A673 (cell line): ENCODE measurements at regions of chr9 and their contacts with region 1.

Region 1: DNA sequence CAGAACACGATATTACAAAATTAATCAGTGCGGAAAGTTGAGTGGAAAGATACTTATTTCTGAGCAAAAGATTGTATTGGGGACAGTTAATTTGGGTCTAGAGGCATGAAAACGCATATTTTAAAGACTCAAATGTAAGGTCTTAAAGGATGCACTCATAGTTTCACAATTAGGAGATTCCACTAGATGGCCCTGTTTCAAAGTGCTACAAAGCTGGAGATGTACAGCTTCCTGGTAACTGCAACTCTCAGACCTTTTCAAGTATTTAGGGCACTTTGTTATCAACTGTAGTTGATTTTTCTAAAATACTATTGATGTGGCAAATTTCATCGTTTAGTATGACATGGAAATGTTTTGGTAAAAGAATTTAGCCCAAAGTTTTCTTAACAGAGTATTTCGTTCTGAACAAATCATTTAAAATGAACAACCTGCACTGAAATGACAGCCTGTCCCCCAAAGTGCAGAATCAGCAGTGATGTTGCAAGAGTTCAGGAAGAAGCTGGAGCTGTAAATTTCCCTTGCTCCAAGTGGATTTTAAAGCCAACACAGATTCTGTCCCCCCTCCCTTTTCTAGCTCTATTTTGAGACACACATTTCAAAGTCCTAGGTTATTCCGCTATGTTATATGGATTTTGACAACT is 16.2 kb upstream of the NDUFB6 start:
- DNase-seq: peak; percentile 62
- H3K4me3 ChIP-seq: no peak overlapping the region
- H3K27ac ChIP-seq: no peak overlapping the region
- H3K4me1 ChIP-seq: no peaks in the 10 kb centered on the region
- H3K27me3 ChIP-seq: no peaks in the 10 kb centered on the region
- CTCF ChIP-seq: peak; percentile 67

Region 2: GRCh38 chr9:32264170-32264862 is 324.9 kb before region 1 on chr9:
- CTCF ChIA-PET with region 1: no interaction called
- POLR2A ChIA-PET with region 1: no interaction called
- intact Hi-C with region 1: no loop called
- DNase-seq: peak; percentile 10
- H3K4me3 ChIP-seq: no peak overlapping the region
- H3K27ac ChIP-seq: no peak overlapping the region
- H3K4me1 ChIP-seq: no peaks in the 10 kb centered on the region
- H3K27me3 ChIP-seq: no peaks in the 10 kb centered on the region
- CTCF ChIP-seq: peak; percentile 31; the same call in 1 of the 2 replicates

Region 3: DNA sequence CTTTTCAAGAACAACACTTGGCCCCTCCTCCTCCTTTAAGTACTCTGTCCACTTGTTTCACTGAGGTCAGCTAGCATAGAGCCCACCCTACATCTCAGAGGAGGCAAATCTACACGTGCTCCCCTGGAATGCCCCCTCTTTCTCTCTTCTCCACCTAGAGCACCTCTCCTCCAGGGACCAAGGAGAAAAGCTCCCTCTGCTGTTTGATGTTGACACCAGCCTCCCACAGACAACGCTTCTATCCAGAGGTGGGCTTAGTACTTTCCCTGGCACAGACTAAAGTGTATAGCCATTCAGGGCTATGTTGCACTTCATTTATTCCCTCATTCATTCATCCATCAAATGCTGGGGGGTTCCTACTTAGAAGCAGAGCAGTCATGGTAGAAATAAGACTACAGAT is 114.4 kb after region 1 on chr9:
- CTCF ChIA-PET with region 1: no interaction called
- POLR2A ChIA-PET with region 1: no interaction called
- intact Hi-C with region 1: loop called (anchors 5 kb)
- DNase-seq: peak; percentile 19
- H3K4me3 ChIP-seq: no peak overlapping the region
- H3K27ac ChIP-seq: no peak overlapping the region
- H3K4me1 ChIP-seq: no peaks in the 10 kb centered on the region
- H3K27me3 ChIP-seq: peaks cover 37% of the 10 kb centered on the region
- CTCF ChIP-seq: peak; percentile 49

Region 4: DNA sequence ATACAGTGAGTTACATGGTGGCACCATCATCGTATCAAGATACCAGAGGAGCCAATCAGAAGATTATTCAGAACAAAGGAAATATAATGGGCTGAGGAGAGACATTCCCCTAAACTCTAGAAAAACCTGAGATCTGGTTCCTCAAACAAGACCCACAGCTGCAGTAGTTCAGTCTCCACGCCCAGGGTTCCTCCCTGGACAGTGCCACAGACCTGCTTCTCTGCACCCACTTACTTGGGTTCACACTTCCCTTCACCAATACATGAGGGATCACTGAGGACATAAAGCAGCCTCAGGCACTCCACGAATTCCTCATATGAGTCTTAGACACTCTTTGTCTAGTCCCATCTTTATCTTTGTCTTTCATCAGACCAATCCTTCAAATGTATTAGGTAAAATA is 310.6 kb after region 1 on chr9:
- CTCF ChIA-PET with region 1: no interaction called
- POLR2A ChIA-PET with region 1: no interaction called
- intact Hi-C with region 1: loop called (anchors 5 kb)
- DNase-seq: no peak
- H3K4me3 ChIP-seq: no peak overlapping the region
- H3K27ac ChIP-seq: no peak overlapping the region
- H3K4me1 ChIP-seq: no peaks in the 10 kb centered on the region
- H3K27me3 ChIP-seq: no peaks in the 10 kb centered on the region
- CTCF ChIP-seq: no peak

Region 5: GRCh38 chr9:32968101-32969011 is 379.2 kb after region 1 on chr9:
- CTCF ChIA-PET with region 1: interaction called, 26 read pairs
- POLR2A ChIA-PET with region 1: no interaction called
- intact Hi-C with region 1: loop called (anchors 1 kb)
- DNase-seq: peak; percentile 57
- H3K4me3 ChIP-seq: no peak overlapping the region
- H3K27ac ChIP-seq: no peak overlapping the region
- H3K4me1 ChIP-seq: peaks cover 11% of the 10 kb centered on the region
- H3K27me3 ChIP-seq: no peaks in the 10 kb centered on the region
- CTCF ChIP-seq: peak; percentile 83